Naive thymus-derived CD4-positive, alpha-beta T cell (primary cell): ENCODE measurements at regions of chr4 and their contacts with region 1.

Region 1: GRCh38 chr4:25234390-25235370 is 847 bp downstream of the PI4K2B start:
- DNase-seq: peak; percentile 20 to 76 (median 64)
- ATAC-seq: peak; percentile 70
- H3K4me3 ChIP-seq: peak overlapping the region; percentile 80
- H3K4me3 Mint-ChIP-seq: peak overlapping the region; percentile 86 to 99 (median 94)
- H3K27ac ChIP-seq: peak overlapping the region; percentile 89
- H3K27ac Mint-ChIP-seq: peak overlapping the region; percentile 89 to 98 (median 95)
- H3K4me1 ChIP-seq: peaks cover 16 to 29% of the 10 kb centered on the region in 2 donors
- H3K4me1 Mint-ChIP-seq: peaks cover 16 to 57% (median 44%) of the 10 kb centered on the region in 7 donors
- H3K27me3 ChIP-seq: no peaks in the 10 kb centered on the region
- H3K27me3 Mint-ChIP-seq: no peaks in the 10 kb centered on the region

Region 2: GRCh38 chr4:25159884-25160713 is 74.6 kb before region 1 on chr4 and contains the start of gene SEPSECS:
- CTCF ChIA-PET with region 1: interaction called, 4 read pairs
- POLR2A ChIA-PET with region 1: interaction called, 54 read pairs
- intact Hi-C with region 1: loop called (anchors 1 kb)
- DNase-seq: peak; percentile 82 to 96 (median 94)
- ATAC-seq: peak; percentile 89
- H3K4me3 ChIP-seq: peak within 1 kb of the TSS; percentile 75
- H3K4me3 Mint-ChIP-seq: peak within 1 kb of the TSS; percentile 87 to 97 (median 94)
- H3K27ac ChIP-seq: peak within 1 kb of the TSS; percentile 97
- H3K27ac Mint-ChIP-seq: peak within 1 kb of the TSS; percentile 93 to 98 (median 96)
- H3K4me1 ChIP-seq: peaks cover 4 to 14% of the 10 kb centered on the region in 2 donors
- H3K4me1 Mint-ChIP-seq: peaks cover 33 to 66% (median 52%) of the 10 kb centered on the region in 7 donors
- H3K27me3 ChIP-seq: no peaks in the 10 kb centered on the region
- H3K27me3 Mint-ChIP-seq: peaks cover 0 to 2% (median 0%) of the 10 kb centered on the region in 5 donors
- total RNA-seq, gene SEPSECS: 14.4 to 25.0 (median 17.2) TPM

Region 3: DNA sequence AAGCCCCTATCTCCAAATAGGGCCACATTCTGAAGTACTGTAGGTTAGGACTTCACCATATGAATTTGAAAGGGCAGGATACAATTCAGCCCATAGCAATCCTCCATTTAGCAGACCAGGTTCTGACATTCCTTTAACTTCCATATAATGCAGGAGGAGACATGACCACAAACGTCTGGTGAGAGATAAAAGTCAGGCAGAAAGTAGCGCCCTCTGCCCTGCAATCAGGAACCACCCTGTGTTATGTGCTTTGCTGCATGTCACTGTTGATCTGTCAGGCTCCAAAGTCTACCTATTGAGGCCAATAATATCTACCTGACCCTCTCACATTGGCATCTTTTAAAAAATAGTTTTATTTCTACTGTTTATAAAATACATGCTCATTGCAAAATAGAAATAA is 44.3 kb before region 1 on chr4:
- CTCF ChIA-PET with region 1: no interaction called
- POLR2A ChIA-PET with region 1: no interaction called
- intact Hi-C with region 1: loop called in 1 of 2 experiments (anchors 5 kb)
- DNase-seq: no peak
- ATAC-seq: no peak
- H3K4me3 ChIP-seq: no peak overlapping the region
- H3K4me3 Mint-ChIP-seq: no peak overlapping the region
- H3K27ac ChIP-seq: no peak overlapping the region
- H3K27ac Mint-ChIP-seq: no peak overlapping the region
- H3K4me1 ChIP-seq: no peaks in the 10 kb centered on the region
- H3K4me1 Mint-ChIP-seq: peaks cover 0 to 16% (median 8%) of the 10 kb centered on the region in 7 donors
- H3K27me3 ChIP-seq: no peaks in the 10 kb centered on the region
- H3K27me3 Mint-ChIP-seq: no peaks in the 10 kb centered on the region

Region 4: GRCh38 chr4:25245181-25245580 is 10.5 kb after region 1 on chr4:
- CTCF ChIA-PET with region 1: no interaction called
- POLR2A ChIA-PET with region 1: no interaction called
- intact Hi-C with region 1: no loop called
- DNase-seq: no peak
- ATAC-seq: no peak
- H3K4me3 ChIP-seq: no peak overlapping the region
- H3K4me3 Mint-ChIP-seq: no peak overlapping the region
- H3K27ac ChIP-seq: no peak overlapping the region
- H3K27ac Mint-ChIP-seq: no peak overlapping the region
- H3K4me1 ChIP-seq: no peaks in the 10 kb centered on the region
- H3K4me1 Mint-ChIP-seq: peaks cover 15 to 45% (median 35%) of the 10 kb centered on the region in 7 donors
- H3K27me3 ChIP-seq: no peaks in the 10 kb centered on the region
- H3K27me3 Mint-ChIP-seq: no peaks in the 10 kb centered on the region

Region 5: GRCh38 chr4:25299480-25300188 is 65.0 kb after region 1 on chr4:
- CTCF ChIA-PET with region 1: no interaction called
- POLR2A ChIA-PET with region 1: no interaction called
- intact Hi-C with region 1: no loop called
- DNase-seq: no peak
- ATAC-seq: no peak
- H3K4me3 ChIP-seq: no peak overlapping the region
- H3K4me3 Mint-ChIP-seq: no peak overlapping the region
- H3K27ac ChIP-seq: no peak overlapping the region
- H3K27ac Mint-ChIP-seq: no peak overlapping the region
- H3K4me1 ChIP-seq: no peaks in the 10 kb centered on the region
- H3K4me1 Mint-ChIP-seq: no peaks in the 10 kb centered on the region
- H3K27me3 ChIP-seq: no peaks in the 10 kb centered on the region
- H3K27me3 Mint-ChIP-seq: peaks cover 7 to 26% (median 9%) of the 10 kb centered on the region in 5 donors

Region 6: DNA sequence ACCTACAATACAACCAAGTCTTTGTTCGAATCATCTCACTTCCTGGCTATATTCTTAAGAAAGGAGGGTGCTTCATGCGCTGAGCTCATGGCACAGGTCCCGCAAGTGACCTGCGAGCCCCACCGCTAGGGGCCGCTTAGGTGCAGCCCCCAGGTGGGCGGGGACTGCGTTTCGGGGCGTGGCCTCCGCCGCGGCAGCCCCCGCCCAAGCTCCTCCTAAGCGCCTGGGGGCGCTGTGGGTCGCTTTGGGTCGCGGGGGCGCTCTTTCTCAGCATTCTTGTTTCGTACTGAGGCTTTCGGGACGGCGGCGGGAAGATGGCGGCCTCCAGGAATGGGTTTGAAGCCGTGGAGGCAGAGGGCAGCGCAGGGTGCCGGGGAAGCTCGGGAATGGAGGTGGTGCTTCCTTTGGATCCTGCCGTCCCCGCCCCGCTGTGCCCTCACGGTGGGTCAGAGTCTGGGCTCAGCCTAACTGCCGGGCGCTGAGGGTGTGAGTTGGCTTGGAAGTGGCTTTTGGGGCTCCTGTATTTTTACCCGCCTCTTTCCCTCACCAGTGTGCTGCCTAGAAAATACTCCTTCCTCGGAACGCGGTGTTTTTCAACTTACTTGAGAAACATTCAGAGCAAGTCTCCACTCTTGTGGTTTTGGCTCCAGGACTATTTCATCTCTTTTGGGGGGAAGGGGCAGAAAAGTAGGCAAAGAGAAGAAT is 78.0 kb after region 1 on chr4 and contains the start of gene ZCCHC4:
- CTCF ChIA-PET with region 1: interaction called, 12 read pairs
- POLR2A ChIA-PET with region 1: interaction called, 31 read pairs
- intact Hi-C with region 1: loop called (anchors 1 kb)
- DNase-seq: peak; percentile 83 to 99 (median 92)
- ATAC-seq: peak; percentile 100
- H3K4me3 ChIP-seq: peak within 1 kb of the TSS; percentile 80
- H3K4me3 Mint-ChIP-seq: peak within 1 kb of the TSS; percentile 91 to 100 (median 98)
- H3K27ac ChIP-seq: peak within 1 kb of the TSS; percentile 71
- H3K27ac Mint-ChIP-seq: peak within 1 kb of the TSS; percentile 90 to 98 (median 95)
- H3K4me1 ChIP-seq: peaks cover 5 to 7% of the 10 kb centered on the region in 2 donors
- H3K4me1 Mint-ChIP-seq: peaks cover 11 to 34% (median 29%) of the 10 kb centered on the region in 7 donors
- H3K27me3 ChIP-seq: no peaks in the 10 kb centered on the region
- H3K27me3 Mint-ChIP-seq: peaks cover 0 to 10% (median 4%) of the 10 kb centered on the region in 5 donors
- total RNA-seq, gene ZCCHC4: 9.5 to 15.5 (median 13.6) TPM

Region 7: DNA sequence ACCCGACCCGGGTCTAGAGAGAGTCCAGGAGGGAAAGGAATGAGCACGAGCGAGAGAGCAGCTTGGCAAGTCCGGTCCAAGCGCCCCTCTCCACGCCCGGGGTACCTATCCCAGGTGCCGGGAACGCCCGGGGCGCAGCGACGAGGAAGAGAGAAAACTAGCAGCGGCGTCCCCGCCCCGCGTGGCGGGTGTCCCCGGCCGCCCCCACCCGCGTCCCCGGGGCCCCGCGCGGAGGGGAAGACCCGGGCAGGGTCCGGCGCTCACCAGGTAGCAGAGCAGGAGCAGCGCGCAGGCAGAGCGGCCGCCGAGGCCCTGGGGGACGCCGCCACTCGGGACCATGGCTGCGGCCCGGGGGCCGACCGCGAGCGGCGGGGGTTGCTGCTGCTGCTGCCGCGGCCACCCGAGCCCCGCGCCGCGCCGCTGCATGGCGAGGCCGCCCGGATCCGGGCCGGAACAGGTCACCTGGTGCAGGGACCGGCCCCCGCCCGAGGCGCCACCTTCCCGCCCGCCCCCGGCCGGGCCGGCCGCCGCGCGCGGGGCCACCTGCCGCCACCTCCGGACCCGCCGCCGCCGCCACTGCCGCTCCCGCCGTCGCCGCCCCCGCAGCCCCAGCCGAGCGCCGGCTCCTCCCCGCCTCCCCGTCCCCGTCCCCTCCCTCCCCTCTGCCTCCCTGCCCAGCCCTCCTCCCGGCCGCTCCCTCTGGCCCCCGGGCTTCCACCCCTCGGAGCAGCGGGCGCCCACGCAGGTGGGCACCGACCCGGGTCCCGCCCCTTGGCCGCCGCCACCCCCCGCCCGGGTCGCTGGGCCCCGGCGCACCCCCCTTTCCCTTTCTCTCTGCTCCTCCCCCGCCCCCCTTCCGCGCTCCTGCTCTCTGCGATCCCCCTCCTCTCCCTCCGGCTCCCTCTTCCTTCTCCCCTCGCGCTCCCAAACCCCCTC is 628.0 kb after region 1 on chr4 and contains the start of gene SEL1L3:
- CTCF ChIA-PET with region 1: no interaction called
- POLR2A ChIA-PET with region 1: no interaction called
- intact Hi-C with region 1: loop called in 1 of 2 experiments (anchors 10 kb)
- DNase-seq: peak in 8 of 9 donors; percentile 13 to 77 (median 29)
- ATAC-seq: peak; percentile 59
- H3K4me3 ChIP-seq: peak within 1 kb of the TSS; percentile 68
- H3K4me3 Mint-ChIP-seq: peak within 1 kb of the TSS; percentile 94 to 100 (median 98)
- H3K27ac ChIP-seq: peak within 1 kb of the TSS; percentile 71
- H3K27ac Mint-ChIP-seq: peak within 1 kb of the TSS; percentile 88 to 99 (median 96)
- H3K4me1 ChIP-seq: peaks cover 30 to 32% of the 10 kb centered on the region in 2 donors
- H3K4me1 Mint-ChIP-seq: peaks cover 32 to 44% (median 39%) of the 10 kb centered on the region in 7 donors
- H3K27me3 ChIP-seq: no peaks in the 10 kb centered on the region
- H3K27me3 Mint-ChIP-seq: peaks cover 0 to 3% (median 0%) of the 10 kb centered on the region in 5 donors
- total RNA-seq, gene SEL1L3: 38.1 to 55.8 (median 47.0) TPM